OCI-LY7 (cell line): ENCODE measurements at regions of chr4 and their contacts with region 1.

Region 1: GRCh38 chr4:10157478-10158332 is 41.1 kb upstream of the WDR1 start:
- DNase-seq: peak; percentile 55
- H3K4me3 ChIP-seq: no peak overlapping the region
- H3K27ac ChIP-seq: no peak overlapping the region
- H3K4me1 ChIP-seq: no peaks in the 10 kb centered on the region
- CTCF ChIP-seq: peak; percentile 82

Region 2: DNA sequence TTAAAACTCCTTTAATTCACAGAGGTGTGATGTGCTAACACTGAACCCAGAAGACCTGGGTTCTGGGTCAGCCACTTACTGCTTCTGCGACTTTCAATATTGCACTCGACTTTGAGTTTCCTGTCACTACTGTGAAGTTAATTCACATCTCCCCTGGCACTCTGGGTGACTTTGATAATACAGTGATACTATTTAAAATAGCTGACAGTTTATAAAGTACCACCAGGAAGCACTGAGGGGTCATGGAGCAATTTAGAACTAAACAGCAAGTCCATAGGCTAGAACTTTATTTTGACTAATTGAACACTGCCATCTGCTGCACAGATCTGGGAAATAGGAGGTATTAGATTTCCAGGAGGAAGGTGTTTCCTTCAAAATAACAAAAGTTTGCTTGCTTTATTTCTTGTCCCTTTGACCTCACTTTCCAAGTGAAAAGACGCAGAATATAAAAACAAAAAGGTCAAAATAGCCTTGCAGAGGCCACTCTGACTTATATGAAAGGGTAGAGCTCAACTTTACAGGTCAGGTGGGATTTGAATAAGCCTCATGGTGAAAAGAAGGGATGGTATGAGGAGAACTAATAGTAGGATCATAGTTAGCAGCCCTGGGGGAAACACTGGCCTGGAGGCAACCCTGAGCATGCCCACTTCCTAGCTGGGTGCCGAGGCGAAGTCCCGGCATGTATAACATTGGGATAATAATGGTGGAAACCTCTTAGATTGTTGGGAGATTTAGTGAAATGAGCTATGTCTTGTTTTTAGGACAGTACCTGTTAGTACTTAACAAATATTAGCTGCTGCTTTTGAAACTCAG is 246.1 kb after region 1 on chr4:
- CTCF ChIA-PET with region 1: no interaction called
- POLR2A ChIA-PET with region 1: no interaction called
- intact Hi-C with region 1: loop called (anchors 5 kb)
- DNase-seq: peak; percentile 9
- H3K4me3 ChIP-seq: no peak overlapping the region
- H3K27ac ChIP-seq: no peak overlapping the region
- H3K4me1 ChIP-seq: no peaks in the 10 kb centered on the region
- CTCF ChIP-seq: peak; percentile 68